OCI-LY7 (cell line): ENCODE measurements at regions of chr7 and their contacts with region 1.

Region 1: DNA sequence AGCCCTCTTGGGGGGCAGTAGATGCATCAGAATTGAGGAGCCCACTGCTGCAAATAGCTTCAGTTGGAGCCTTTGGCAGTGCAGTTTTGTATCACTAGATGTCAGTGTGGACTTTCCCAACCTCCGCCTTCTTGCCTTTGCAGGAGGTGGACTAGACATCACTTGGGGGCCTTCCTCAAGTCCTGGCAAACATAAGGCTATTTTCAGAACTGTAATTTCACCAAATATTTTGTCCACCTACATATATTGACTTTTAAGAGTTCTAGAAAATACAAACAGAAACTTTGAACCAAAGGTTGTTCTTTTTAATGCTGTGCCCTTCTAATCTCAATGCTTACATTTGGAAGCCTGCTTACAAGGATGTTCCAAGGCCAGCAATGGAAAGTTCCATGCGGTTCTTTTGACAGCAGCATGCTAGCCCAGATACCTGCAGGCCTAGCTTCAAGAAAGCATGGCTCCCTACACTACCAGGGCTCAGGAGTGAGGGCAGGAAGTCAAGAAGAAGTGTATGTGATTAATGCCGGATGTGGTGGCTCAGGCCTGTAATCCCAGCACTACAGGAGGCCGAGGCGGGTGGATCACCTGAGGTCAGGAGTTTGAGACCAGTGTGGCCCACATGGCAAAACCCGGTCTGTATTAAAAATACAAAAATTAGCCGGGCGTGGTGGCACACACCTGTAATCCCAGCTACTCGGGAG is 8.0 kb upstream of the ZNRF2 start:
- DNase-seq: peak; percentile 92
- H3K4me3 ChIP-seq: peak overlapping the region; percentile 51
- H3K27ac ChIP-seq: peak overlapping the region; percentile 81
- H3K4me1 ChIP-seq: peaks cover 76% of the 10 kb centered on the region
- CTCF ChIP-seq: peak; percentile 98

Region 2: DNA sequence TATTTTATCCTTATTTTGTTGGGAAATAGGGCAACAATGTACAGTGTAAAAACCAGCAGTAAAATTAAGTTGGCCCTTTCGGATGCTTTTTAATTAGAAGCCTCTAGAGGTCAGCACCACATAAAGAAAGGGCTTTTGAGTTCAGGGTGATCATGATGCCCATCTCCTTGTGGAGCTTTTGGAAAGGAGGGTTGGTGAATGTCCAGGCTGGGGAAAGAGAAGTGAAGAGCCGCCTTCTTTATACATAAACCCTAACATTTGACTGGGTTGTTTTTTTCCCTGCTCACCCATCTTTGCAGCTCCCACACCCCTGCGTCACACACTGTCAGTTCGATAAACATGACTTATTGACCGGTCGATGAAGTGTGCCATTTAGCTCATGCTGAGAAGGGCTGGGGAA is 111.8 kb before region 1 on chr7:
- CTCF ChIA-PET with region 1: interaction called, 7 read pairs
- POLR2A ChIA-PET with region 1: interaction called, 5 read pairs
- intact Hi-C with region 1: loop called (anchors 1 kb)
- DNase-seq: peak; percentile 75
- H3K4me3 ChIP-seq: no peak overlapping the region
- H3K27ac ChIP-seq: no peak overlapping the region
- H3K4me1 ChIP-seq: peaks cover 37% of the 10 kb centered on the region
- CTCF ChIP-seq: peak; percentile 92

Region 3: DNA sequence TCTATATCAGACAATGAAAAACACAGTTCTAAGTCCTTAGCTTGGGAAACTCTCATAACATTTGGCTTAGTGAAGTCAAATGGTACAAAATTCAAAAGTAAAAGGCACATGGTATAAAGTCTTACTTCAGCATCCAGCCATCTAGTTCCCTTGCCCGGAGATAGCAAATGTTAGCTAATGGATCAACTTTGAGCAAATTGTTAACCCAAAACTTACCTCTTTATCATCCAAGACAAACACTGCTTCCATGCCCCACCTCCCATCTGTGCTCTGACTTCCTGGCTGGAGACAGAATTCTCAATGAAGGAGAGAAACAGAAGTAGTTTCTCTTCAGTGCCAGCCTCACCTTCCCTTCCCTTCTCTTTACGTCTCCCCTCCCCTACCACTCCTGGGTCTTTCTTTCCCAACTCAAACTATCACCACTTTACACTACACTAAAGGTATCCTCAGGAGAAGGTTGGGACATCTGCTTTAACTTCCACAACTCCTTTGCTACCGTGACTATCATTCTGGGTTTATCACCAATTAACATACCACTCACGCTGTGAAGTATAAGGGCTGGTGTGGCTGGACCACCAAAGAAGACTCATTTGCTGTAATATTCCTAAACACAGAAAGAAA is 13.2 kb before region 1 on chr7:
- CTCF ChIA-PET with region 1: interaction called, 5 read pairs
- POLR2A ChIA-PET with region 1: interaction called, 31 read pairs
- intact Hi-C with region 1: no loop called
- DNase-seq: no peak
- H3K4me3 ChIP-seq: no peak overlapping the region
- H3K27ac ChIP-seq: no peak overlapping the region
- H3K4me1 ChIP-seq: peaks cover 9% of the 10 kb centered on the region
- CTCF ChIP-seq: no peak

Region 4: GRCh38 chr7:30348083-30348560 is 71.8 kb after region 1 on chr7:
- CTCF ChIA-PET with region 1: interaction called, 5 read pairs
- POLR2A ChIA-PET with region 1: interaction called, 19 read pairs
- intact Hi-C with region 1: loop called (anchors 1 kb)
- DNase-seq: peak; percentile 58
- H3K4me3 ChIP-seq: peak overlapping the region; percentile 31
- H3K27ac ChIP-seq: peak overlapping the region; percentile 31
- H3K4me1 ChIP-seq: peaks cover 66% of the 10 kb centered on the region
- CTCF ChIP-seq: no peak

Region 5: DNA sequence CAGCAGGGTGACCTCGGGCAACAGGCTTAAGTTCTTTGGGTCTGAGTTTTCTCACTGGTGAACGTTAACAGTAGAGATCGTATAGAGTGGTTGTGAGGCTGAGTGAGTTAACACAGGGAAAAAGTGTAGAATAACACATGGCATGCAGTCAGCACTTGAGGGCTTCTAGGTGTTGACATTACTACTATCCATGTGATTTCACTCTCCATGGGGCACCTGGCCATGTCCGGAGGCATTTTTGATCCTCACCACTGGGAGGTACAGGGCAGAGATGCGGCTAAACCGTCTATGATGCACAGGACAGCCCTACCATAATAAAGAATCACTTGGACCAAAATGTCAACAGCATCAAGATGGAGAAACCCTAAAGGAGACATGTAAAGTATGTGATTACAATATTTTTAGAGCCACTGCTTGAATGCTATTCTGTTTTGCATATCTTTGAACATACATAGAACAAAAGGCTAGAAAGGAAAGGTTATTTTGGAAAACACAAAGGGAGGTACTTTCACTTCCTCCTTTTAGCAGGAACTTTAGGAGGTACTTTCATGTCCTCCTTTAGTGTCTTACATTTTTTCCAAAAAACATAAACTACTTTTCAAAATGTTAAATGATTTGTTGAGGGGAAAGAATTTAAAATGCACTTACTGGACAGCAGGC is 157.9 kb after region 1 on chr7:
- CTCF ChIA-PET with region 1: no interaction called
- POLR2A ChIA-PET with region 1: no interaction called
- intact Hi-C with region 1: loop called (anchors 1 kb)
- DNase-seq: peak; percentile 83
- H3K4me3 ChIP-seq: peak overlapping the region; percentile 49
- H3K27ac ChIP-seq: peak overlapping the region; percentile 59
- H3K4me1 ChIP-seq: peaks cover 61% of the 10 kb centered on the region
- CTCF ChIP-seq: peak; percentile 28; the same call in 1 of the 2 replicates

Region 6: DNA sequence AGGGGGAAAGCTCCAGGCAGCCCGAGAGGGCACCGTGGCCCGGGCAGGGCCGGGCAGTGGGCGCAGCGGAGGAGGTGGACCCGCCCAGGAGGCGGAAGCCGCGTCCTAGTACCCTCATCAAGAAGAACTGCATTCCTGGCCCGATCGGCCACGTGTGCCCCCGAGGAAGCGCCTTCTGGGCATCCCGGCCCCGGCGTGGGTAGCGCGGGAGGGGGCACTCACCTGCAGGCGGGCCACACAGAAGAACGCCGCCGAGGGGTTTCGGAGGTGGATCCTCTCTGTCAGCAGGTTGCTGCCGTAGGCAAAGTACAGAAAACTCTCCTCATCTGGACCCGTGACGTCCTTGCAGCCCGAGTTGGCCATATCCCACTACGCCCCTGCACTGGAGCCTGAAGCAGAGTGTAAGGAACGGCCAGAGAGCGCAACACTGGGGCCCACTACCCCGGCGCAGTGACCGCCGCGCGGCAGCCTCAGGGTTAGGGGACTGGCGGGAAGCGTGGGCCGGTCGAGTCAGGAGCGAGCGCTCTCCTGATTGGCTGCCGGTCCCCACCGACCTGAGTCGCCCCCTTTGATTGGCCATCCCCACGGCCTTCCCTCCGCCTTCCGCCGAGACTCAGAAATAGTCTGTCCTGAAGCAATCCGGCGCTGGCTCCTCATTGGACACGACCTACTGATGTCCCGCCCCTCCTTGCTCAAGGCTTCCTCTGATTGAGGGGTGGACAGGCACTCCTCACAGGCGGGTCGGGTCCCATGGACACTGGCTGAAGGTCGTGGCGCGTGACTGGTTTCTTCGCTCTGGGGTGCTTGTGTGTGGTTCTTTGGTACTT is 228.2 kb after region 1 on chr7 and contains the start of gene GGCT:
- CTCF ChIA-PET with region 1: no interaction called
- POLR2A ChIA-PET with region 1: no interaction called
- intact Hi-C with region 1: loop called (anchors 2 kb)
- DNase-seq: peak; percentile 99
- H3K4me3 ChIP-seq: peak within 1 kb of the TSS; percentile 84
- H3K27ac ChIP-seq: peak within 1 kb of the TSS; percentile 34
- H3K4me1 ChIP-seq: peaks cover 22% of the 10 kb centered on the region
- CTCF ChIP-seq: no peak
- total RNA-seq, gene GGCT: 70.3 and 81.7 TPM in 2 replicates

Region 7: GRCh38 chr7:30727061-30727945 is 451.0 kb after region 1 on chr7:
- CTCF ChIA-PET with region 1: no interaction called
- POLR2A ChIA-PET with region 1: no interaction called
- intact Hi-C with region 1: loop called (anchors 2 kb)
- DNase-seq: peak; percentile 73
- H3K4me3 ChIP-seq: peak overlapping the region; percentile 63
- H3K27ac ChIP-seq: peak overlapping the region; percentile 58
- H3K4me1 ChIP-seq: peaks cover 27% of the 10 kb centered on the region
- CTCF ChIP-seq: no peak